Ascending aorta (tissue), 2 donors: ENCODE measurements at regions of chr18 and their contacts with region 1.

Region 1: DNA sequence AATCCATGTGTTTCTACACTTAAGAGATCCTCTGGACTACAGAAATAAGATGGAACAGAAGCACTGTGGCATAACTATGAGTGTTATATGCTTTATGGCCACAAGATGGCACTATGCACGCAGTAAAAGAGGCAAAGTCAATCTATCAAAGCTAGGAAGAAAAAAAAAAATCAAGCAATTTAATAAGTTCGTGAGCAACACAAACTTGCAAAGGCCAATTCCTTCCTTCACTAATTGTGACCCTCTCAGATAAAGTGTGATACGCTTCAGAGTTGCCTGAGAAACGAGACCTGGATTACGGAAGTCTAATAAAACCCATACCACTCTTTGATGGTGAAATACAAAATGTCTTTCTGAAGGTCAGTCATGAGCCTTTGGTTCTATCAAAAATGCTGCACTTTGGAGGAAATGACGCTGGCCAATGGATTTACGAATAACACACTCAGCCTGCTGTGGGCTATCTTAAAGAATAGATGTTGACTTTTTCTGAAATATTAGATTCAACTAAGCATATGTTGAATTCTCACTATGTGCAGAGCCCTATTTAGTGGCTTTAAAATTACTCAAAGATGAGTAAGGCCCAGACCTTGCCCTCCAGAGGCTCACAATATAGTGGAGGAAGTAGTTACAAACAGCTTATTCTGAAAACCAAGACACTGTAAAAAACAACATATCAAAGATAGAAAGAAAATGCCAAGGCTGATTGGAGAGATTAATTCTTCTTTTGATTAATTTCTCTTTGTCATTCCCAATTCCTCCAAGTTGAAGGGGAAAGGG is 35.5 kb upstream of the TTR start:
- DNase-seq: no peak
- H3K4me3 ChIP-seq: no peak overlapping the region
- H3K27ac ChIP-seq: no peak overlapping the region
- H3K4me1 ChIP-seq: no peaks in the 10 kb centered on the region
- H3K27me3 ChIP-seq: no peaks in the 10 kb centered on the region
- CTCF ChIP-seq: peak; percentile 41 to 76 (median 67)

Region 2: DNA sequence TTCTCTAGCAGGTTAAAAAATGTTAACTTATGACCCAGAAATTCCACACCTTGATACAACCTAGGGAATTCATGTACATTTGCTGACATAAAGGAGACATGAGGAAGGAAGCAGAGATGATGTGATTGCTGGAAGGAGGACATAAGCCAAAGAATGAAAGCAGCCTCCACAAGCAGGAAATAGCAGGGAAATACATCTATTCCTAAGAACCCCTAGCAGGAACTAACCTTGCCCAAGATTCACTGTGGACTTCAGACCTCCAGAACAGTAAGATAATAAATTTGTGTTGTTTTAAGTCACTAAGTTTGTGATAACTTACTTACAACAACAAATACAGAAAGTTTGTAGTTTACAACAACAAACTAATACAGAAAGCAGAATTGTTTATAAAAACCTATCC is 184.2 kb before region 1 on chr18:
- intact Hi-C with region 1: no loop called
- DNase-seq: no peak
- H3K4me3 ChIP-seq: no peak overlapping the region
- H3K27ac ChIP-seq: no peak overlapping the region
- H3K4me1 ChIP-seq: no peaks in the 10 kb centered on the region
- H3K27me3 ChIP-seq: no peaks in the 10 kb centered on the region
- CTCF ChIP-seq: no peak

Region 3: DNA sequence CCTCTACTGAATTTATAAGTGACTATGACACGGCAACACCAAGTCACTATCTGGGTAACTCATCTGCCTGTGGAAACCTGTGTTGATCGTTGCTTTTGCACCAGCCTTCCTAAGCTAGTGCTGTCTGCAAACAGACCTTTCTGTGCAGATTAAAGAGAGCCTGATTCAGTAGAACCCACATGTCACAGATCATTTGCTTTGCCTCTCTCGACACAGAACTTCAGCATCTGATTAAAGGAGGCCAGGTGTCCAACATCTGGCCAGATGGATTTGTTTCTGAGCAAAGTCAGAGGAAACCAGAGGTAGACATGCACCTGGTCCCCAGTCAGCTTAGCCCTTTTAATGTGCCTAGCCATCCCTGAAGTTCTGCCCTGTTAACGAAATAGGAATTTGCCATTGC is 20.5 kb after region 1 on chr18:
- intact Hi-C with region 1: no loop called
- DNase-seq: no peak
- H3K4me3 ChIP-seq: no peak overlapping the region
- H3K27ac ChIP-seq: no peak overlapping the region
- H3K4me1 ChIP-seq: no peaks in the 10 kb centered on the region
- H3K27me3 ChIP-seq: no peaks in the 10 kb centered on the region
- CTCF ChIP-seq: no peak

Region 4: DNA sequence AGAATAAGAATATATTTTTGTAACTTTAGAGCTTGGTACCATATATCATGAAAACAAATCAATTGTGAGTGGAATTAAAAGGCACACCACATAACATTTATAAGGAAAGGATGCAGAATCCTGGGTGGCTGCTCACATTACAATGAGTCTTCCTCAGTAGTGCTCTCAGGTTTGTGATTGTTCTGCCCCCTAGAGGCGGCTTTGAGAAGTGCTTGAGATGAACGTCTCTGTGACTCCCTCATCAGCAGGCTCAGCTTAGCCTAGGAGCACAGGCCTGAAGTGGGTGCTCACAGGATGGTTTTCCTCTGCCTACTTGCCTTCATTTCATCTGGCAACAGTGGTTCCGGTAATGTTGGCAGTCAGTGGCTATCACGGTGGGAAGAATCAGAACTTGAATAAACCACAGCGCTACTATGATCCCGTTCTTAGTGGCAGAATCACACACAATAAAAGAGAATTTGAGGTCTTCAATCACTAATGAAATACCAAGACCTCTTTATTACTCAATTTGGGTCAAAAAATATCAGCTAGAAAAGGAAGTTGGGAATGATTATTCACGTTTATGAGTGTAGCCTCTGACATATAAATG is 166.3 kb after region 1 on chr18:
- intact Hi-C with region 1: loop called (anchors 5 kb)
- DNase-seq: peak; percentile 16 to 89
- H3K4me3 ChIP-seq: no peak overlapping the region
- H3K27ac ChIP-seq: no peak overlapping the region
- H3K4me1 ChIP-seq: peaks cover 0 to 10% of the 10 kb centered on the region in 2 donors
- H3K27me3 ChIP-seq: no peaks in the 10 kb centered on the region
- CTCF ChIP-seq: peak; percentile 44 to 86 (median 79)

Region 5: DNA sequence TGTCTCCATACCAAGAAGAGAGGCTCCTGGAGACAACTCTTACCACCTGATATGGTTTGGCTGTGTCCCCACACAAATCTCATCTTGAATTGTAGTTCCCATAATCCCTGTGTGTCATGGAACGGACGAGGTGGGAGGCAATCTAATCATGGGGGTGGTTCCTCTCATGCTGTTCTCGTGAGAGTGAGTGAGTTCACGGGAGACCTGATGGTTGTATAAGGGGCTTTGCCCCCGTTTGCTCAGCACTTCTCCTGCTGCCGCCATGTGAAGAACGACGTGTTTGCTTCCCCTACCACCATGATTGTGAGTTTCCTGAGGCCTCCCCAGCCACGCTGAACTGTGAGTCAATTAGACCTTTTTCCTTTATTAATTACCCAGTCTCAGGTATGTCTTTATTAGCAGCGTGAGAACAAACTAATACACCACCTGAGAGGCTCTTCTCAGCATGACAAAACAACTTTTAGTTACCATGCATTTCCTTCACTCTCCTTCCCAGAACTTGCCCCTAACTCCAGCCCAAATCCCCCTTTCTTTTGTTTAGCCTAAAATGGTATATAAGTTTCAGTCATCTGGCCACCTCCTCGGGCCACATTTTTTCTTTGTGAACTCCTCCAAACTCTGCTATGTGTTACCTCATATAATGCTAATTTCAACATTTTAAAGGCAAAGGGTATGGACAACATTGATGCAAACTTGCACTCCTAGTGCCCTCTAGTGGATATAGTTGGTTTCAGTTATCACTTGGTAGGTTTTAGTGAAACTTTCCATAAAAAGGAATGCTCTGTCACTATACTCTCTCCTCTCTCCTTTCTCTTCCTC is 263.2 kb after region 1 on chr18:
- intact Hi-C with region 1: loop called (anchors 1 kb)
- DNase-seq: no peak
- H3K4me3 ChIP-seq: no peak overlapping the region
- H3K27ac ChIP-seq: no peak overlapping the region
- H3K4me1 ChIP-seq: no peaks in the 10 kb centered on the region
- H3K27me3 ChIP-seq: no peaks in the 10 kb centered on the region
- CTCF ChIP-seq: peak in 2 of 3 experiments; percentile 46 to 66

Region 6: DNA sequence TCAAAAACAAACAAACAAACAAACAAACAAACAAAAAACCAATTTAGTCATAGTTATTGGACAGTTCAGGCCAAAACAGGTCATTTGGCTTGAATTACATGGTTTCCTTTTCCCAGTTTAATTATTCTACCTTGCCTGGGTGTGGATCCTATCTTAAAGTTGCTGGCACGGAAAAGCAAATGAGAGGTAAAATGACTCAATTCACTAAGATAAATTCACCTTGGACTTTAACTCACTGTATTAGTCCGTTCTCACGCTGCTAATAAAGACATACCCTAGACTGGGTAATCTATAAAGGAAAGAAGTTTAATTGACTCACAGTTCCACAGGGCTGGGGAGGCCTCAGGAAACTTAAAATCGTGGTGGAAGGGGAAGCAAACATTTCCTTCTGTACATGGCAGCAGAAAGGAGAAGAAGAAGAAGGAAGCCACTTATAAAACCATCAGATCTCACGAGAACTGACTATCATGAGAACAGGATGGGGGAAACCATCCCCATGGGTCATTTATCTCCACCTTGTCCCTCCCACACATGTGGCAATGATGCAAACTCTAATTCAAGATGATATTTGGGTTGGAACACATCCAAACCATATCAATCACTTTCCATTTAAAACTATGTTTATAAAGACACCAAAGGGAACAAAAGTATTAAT is 409.3 kb after region 1 on chr18:
- intact Hi-C with region 1: no loop called
- DNase-seq: no peak
- H3K4me3 ChIP-seq: no peak overlapping the region
- H3K27ac ChIP-seq: no peak overlapping the region
- H3K4me1 ChIP-seq: no peaks in the 10 kb centered on the region
- H3K27me3 ChIP-seq: no peaks in the 10 kb centered on the region
- CTCF ChIP-seq: no peak

Region 7: GRCh38 chr18:31977270-31977872 is 421.2 kb after region 1 on chr18:
- intact Hi-C with region 1: loop called (anchors 5 kb)
- DNase-seq: no peak
- H3K4me3 ChIP-seq: no peak overlapping the region
- H3K27ac ChIP-seq: no peak overlapping the region
- H3K4me1 ChIP-seq: no peaks in the 10 kb centered on the region
- H3K27me3 ChIP-seq: no peaks in the 10 kb centered on the region
- CTCF ChIP-seq: peak; percentile 13 to 60 (median 41)

Region 8: DNA sequence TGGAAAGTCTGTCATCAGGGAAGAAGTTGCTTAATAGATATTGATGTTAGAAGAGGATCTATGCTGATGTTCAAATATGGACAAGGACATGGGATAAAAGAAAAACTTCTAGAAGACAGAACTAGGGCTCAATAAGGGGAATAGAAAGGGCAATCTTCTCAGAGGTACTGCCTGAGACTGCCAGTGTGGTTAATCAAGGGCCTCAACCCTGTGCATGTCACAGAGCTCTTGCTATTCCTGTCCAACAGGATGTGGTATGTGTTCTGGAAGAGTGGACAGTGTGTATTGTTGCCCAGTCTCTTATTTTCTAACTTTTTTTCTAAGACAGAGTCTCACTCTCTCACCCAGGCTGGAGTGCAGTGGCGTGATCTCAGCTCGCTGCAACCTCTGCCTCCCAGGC is 434.7 kb after region 1 on chr18:
- intact Hi-C with region 1: no loop called
- DNase-seq: no peak
- H3K4me3 ChIP-seq: no peak overlapping the region
- H3K27ac ChIP-seq: no peak overlapping the region
- H3K4me1 ChIP-seq: no peaks in the 10 kb centered on the region
- H3K27me3 ChIP-seq: no peaks in the 10 kb centered on the region
- CTCF ChIP-seq: no peak